ENCODE measurements at regions of chr15 and their contacts with region 1.

Region 1: GRCh38 chr15:90154861-90155626 is 46.1 kb upstream of the SEMA4B start:
- DNase-seq: peak in 1 of 2 donors; percentile 74
- H3K4me3 ChIP-seq: no peak overlapping the region
- H3K27ac ChIP-seq: peak overlapping the region in 1 of 5 donors; percentile 2
- H3K4me1 ChIP-seq: peaks cover 19 to 41% (median 33%) of the 10 kb centered on the region in 4 donors
- H3K27me3 ChIP-seq: no peaks in the 10 kb centered on the region
- CTCF ChIP-seq: no peak
- EP300 ChIP-seq: no peak
- POLR2A ChIP-seq: no peak

Region 2: GRCh38 chr15:90221246-90221900 is 66.3 kb after region 1 on chr15:
- intact Hi-C with region 1: loop called (anchors 5 kb)
- DNase-seq: peak; percentile 81 to 92
- H3K4me3 ChIP-seq: no peak overlapping the region
- H3K27ac ChIP-seq: peak overlapping the region in 4 of 5 donors; percentile 46 to 62 (median 58)
- H3K4me1 ChIP-seq: peaks cover 14 to 28% (median 20%) of the 10 kb centered on the region in 4 donors
- H3K27me3 ChIP-seq: no peaks in the 10 kb centered on the region
- CTCF ChIP-seq: peak in 5 of 7 experiments; percentile 65 to 83 (median 72)
- EP300 ChIP-seq: no peak
- POLR2A ChIP-seq: no peak

Measured in stomach (tissue), 19 donors.